SK-N-SH (cell line): ENCODE measurements at regions of chr19 and their contacts with region 1.

Region 1: GRCh38 chr19:11482384-11483050 is 1.7 kb upstream of the ELAVL3 start:
- DNase-seq: peak; percentile 97
- H3K4me3 ChIP-seq: peak overlapping the region; percentile 51 to 66
- H3K27ac ChIP-seq: peak overlapping the region in 1 of 2 experiments; percentile 88; a peak in 2 of 4 replicates
- H3K4me1 ChIP-seq: peaks cover 0 to 19% of the 10 kb centered on the region in 2 experiments; a peak in 1 of 4 replicates
- H3K27me3 ChIP-seq: peaks cover 25% of the 10 kb centered on the region; the same call in 1 of the 2 replicates
- CTCF ChIP-seq: peak; percentile 81
- EP300 ChIP-seq: peak in 1 of 2 experiments; percentile 18; a peak in 1 of 4 replicates
- RAD21 ChIP-seq: peak; percentile 81

Region 2: DNA sequence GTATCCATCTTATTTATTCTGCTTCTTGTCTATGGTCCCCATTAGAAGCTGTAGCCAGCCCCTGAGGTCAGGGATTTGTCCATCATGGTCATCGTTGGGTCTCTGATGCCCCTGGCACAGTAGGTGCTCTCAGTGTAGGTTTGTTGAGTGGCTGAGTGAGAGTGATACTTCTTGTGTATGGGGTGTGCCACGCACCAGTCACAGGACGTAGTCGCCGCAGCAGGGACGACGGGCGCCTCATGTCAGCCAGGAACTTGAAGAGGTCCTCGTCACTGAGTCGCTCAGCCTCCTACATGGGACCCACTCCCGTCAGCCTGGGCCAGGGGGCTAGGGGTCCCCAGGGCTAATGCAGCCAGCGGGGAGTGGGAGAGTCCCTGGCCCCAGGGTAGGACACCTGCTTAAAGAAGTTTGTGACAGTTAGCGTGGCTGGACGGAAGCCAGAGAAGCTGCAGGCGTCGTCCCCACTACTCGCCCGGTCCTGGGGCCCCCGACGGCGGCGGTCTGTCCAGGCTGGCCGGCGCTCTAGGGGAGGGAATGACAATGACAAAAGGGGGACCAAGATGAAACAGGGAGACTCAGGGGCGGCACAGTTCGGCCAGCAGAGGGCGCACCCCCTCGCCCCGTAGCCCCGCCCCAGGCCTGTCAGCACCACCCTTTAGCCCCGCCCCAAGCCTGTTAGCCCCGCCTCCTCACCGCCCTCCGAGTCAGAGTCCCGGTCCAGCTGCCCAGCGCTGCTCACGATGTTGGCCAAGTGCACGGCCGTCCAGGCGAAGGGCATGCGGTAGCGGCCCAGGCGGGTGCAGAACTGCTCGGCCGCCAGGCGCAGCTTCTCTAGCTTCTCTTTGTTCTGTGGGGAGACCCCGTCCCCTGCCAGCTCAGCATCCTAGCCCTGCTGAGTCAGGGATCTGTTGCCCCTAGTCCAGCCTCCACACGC is 239.4 kb before region 1 on chr19:
- CTCF ChIA-PET with region 1: interaction called, 11 read pairs
- POLR2A ChIA-PET with region 1: no interaction called
- DNase-seq: peak; percentile 100
- H3K4me3 ChIP-seq: peak overlapping the region in 1 of 2 experiments; percentile 37; a peak in 1 of 4 replicates
- H3K27ac ChIP-seq: no peak overlapping the region; a peak in 1 of 4 replicates
- H3K4me1 ChIP-seq: peaks cover 0 to 4% of the 10 kb centered on the region in 2 experiments; a peak in 1 of 4 replicates
- H3K27me3 ChIP-seq: no peaks in the 10 kb centered on the region
- CTCF ChIP-seq: peak; percentile 89
- EP300 ChIP-seq: no peak
- RAD21 ChIP-seq: no peak

Region 3: GRCh38 chr19:11346092-11346940 is 136.2 kb before region 1 on chr19 and contains the starts of genes CCDC159 and TMEM205:
- CTCF ChIA-PET with region 1: interaction called, 10 read pairs
- POLR2A ChIA-PET with region 1: no interaction called
- DNase-seq: peak; percentile 95
- H3K4me3 ChIP-seq: peak within 1 kb of the TSS; percentile 74 to 96
- H3K27ac ChIP-seq: peak within 1 kb of the TSS; percentile 58 to 74
- H3K4me1 ChIP-seq: peaks cover 13 to 14% of the 10 kb centered on the region in 2 experiments; a peak in 2 of 4 replicates
- H3K27me3 ChIP-seq: no peaks in the 10 kb centered on the region
- CTCF ChIP-seq: peak; percentile 28; the same call in 1 of the 2 replicates
- EP300 ChIP-seq: no peak
- RAD21 ChIP-seq: no peak
- polyA plus RNA-seq, gene CCDC159: 25.2 and 30.1 TPM in 2 replicates
- polyA plus RNA-seq, gene TMEM205: 209 and 219 TPM in 2 replicates

Region 4: GRCh38 chr19:11380653-11381534 is 101.6 kb before region 1 on chr19:
- CTCF ChIA-PET with region 1: interaction called, 51 read pairs
- POLR2A ChIA-PET with region 1: interaction called, 15 read pairs
- DNase-seq: peak; percentile 95
- H3K4me3 ChIP-seq: peak overlapping the region; percentile 61 to 70
- H3K27ac ChIP-seq: peak overlapping the region; percentile 51 to 73
- H3K4me1 ChIP-seq: peaks cover 16 to 19% of the 10 kb centered on the region in 2 experiments; a peak in 3 of 4 replicates
- H3K27me3 ChIP-seq: no peaks in the 10 kb centered on the region
- CTCF ChIP-seq: peak; percentile 72
- EP300 ChIP-seq: no peak
- RAD21 ChIP-seq: peak; percentile 42

Region 5: GRCh38 chr19:11435058-11435832 is 47.3 kb before region 1 on chr19 and contains the starts of genes ODAD3 and PRKCSH:
- CTCF ChIA-PET with region 1: interaction called, 21 read pairs
- POLR2A ChIA-PET with region 1: interaction called, 3 read pairs
- DNase-seq: peak; percentile 96
- H3K4me3 ChIP-seq: peak within 1 kb of the TSS; percentile 69 to 83
- H3K27ac ChIP-seq: peak within 1 kb of the TSS; percentile 73
- H3K4me1 ChIP-seq: peaks cover 5 to 12% of the 10 kb centered on the region in 2 experiments; a peak in 1 of 4 replicates
- H3K27me3 ChIP-seq: no peaks in the 10 kb centered on the region
- CTCF ChIP-seq: peak; percentile 77
- EP300 ChIP-seq: no peak
- RAD21 ChIP-seq: peak; percentile 38; the same call in 1 of the 2 replicates
- polyA plus RNA-seq, gene ODAD3: 3.2 and 4.2 TPM in 2 replicates
- polyA plus RNA-seq, gene PRKCSH: 198 and 502 TPM in 2 replicates

Region 6: DNA sequence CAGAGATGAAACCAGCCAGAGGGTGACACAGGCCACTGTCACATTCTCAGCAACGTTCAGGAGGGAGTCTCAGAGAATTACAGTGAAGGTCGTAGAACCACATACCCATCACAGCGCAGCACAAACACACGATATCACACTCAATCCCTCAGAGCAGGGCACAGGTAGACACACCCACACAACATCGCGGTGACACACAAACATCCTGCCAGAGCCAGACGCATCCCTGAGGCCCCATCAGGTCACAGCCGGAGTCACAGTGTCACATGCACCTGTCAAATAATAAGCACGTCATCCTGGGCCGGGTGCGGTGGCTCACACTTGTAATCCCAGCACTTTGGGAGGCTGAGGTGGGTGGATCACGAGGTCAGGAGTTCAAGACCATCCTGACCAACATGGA is 19.1 kb before region 1 on chr19:
- CTCF ChIA-PET with region 1: interaction called, 22 read pairs
- POLR2A ChIA-PET with region 1: interaction called, 3 read pairs
- DNase-seq: no peak
- H3K4me3 ChIP-seq: no peak overlapping the region
- H3K27ac ChIP-seq: no peak overlapping the region
- H3K4me1 ChIP-seq: no peaks in the 10 kb centered on the region
- H3K27me3 ChIP-seq: no peaks in the 10 kb centered on the region
- CTCF ChIP-seq: no peak
- EP300 ChIP-seq: no peak
- RAD21 ChIP-seq: no peak